Endothelial cell of umbilical vein (primary cell): ENCODE measurements at regions of chr16 and their contacts with region 1.

Region 1: GRCh38 chr16:6643080-6643686 is 689.5 kb upstream of the RBFOX1 start:
- DNase-seq: peak; percentile 58
- H3K4me3 ChIP-seq: no peak overlapping the region
- H3K27ac ChIP-seq: no peak overlapping the region
- H3K4me1 ChIP-seq: no peaks in the 10 kb centered on the region
- H3K27me3 ChIP-seq: no peaks in the 10 kb centered on the region
- CTCF ChIP-seq: peak; percentile 47 to 59
- POLR2A ChIP-seq: no peak

Region 2: GRCh38 chr16:5234295-5235050 is 1408.7 kb before region 1 on chr16:
- CTCF ChIA-PET with region 1: interaction called, 40 read pairs
- POLR2A ChIA-PET with region 1: no interaction called
- dilution Hi-C with region 1: no loop called
- intact Hi-C with region 1: no loop called
- DNase-seq: no peak
- H3K4me3 ChIP-seq: no peak overlapping the region
- H3K27ac ChIP-seq: no peak overlapping the region
- H3K4me1 ChIP-seq: no peaks in the 10 kb centered on the region
- H3K27me3 ChIP-seq: no peaks in the 10 kb centered on the region
- CTCF ChIP-seq: no peak
- POLR2A ChIP-seq: no peak